Ovary (tissue), 10 donors: ENCODE measurements at regions of chr17 and their contacts with region 1.

Region 1: DNA sequence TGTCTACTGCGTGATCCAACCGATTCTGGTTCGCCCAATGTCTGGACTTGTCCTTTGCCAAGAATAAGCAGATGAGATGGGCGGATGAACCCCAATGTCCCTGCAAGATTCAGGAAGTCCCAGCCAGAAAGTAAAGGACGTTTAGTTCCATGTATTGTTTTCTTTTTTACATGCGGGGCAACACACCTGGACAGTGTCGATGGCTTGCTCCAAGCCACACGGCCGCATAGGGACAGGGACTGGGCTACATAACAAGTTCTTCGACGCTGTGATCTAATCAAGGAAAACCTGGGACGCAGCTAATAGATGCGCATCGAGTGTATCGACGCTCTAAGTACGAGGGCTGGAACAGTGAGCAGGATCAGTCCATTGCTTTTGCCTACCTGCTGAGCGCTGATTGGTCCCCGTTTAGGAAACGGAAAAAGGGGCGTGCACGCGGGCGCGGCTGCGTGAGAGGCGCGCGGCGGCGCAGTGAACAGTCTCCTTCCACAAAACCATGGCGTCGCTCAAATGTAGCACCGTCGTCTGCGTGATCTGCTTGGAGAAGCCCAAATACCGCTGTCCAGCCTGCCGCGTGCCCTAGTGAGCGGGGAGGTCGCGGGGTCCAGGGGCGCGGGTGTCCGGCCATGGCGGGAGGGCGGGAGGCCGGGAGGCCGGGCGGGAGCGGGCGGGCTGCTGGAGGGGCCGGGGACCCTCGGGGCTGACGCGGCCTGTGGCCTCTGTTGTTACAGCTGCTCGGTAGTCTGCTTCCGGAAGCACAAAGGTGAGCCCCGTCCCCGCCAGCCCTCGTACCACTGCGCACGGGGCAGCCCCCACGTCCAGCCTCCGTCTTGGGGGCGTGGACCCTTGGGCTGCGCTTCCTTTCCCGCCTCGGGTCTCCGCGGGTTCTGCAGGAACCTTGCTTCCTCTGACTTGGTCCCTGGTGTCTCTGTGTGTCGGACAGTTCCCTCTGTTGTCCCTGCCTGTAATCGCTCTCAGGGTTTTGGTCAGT is at the start of gene ZNHIT3:
- DNase-seq: peak; percentile 82 to 91 (median 88)
- H3K4me3 ChIP-seq: peak within 1 kb of the TSS; percentile 84
- H3K27ac ChIP-seq: peak within 1 kb of the TSS; percentile 60 to 72
- H3K4me1 ChIP-seq: peaks cover 20% of the 10 kb centered on the region
- H3K27me3 ChIP-seq: no peaks in the 10 kb centered on the region
- CTCF ChIP-seq: no peak
- EP300 ChIP-seq: no peak
- POLR2A ChIP-seq: peak; percentile 42
- total RNA-seq, gene ZNHIT3: 27.7 to 47.2 (median 29.9) TPM

Region 2: GRCh38 chr17:35764123-35764991 is 722.1 kb before region 1 on chr17:
- intact Hi-C with region 1: loop called in 1 of 4 experiments (anchors 10 kb)
- DNase-seq: peak; percentile 77 to 91 (median 83)
- H3K4me3 ChIP-seq: peak overlapping the region; percentile 38
- H3K27ac ChIP-seq: no peak overlapping the region
- H3K4me1 ChIP-seq: peaks cover 3% of the 10 kb centered on the region
- H3K27me3 ChIP-seq: no peaks in the 10 kb centered on the region
- CTCF ChIP-seq: peak; percentile 85 to 91 (median 91)
- EP300 ChIP-seq: no peak
- POLR2A ChIP-seq: no peak

Region 3: DNA sequence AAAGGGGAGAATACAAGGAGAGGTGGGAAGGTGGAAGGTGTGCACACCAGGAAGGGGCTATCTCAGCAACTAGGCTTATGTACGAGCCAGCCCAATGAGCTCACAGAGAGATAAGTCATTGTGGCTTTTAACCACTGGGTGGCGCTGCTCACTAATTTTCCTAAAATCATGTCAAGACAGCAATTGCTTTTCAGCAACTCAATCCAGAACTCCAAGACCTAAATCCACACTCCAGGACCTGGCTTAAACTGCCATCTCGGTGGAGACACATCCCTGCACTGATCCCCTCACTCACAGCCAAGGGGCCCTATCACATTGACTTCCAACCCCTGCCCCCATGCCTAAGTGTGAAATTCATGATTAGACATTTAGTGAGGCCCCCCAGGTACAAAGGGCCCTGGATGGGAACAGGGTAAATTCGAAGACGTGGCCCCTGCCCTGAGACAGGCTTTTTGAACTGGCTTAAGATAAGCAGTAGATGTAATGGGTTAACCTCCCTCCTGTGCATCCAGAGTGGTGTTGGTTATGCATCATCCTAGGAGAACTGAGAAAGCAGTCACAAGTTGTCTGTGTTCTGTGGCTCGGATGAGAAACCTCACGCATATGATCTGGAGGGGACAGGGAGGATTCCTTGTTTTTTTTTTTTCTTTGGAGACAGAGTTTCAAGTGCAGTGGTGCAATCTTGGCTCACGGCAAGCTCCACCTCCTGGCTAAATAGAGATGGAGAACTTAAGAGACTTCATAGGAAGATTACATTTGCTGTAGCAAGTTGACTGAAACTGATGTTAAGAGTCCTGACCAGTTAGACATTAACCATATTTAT is 516.7 kb before region 1 on chr17:
- intact Hi-C with region 1: loop called in 1 of 4 experiments (anchors 10 kb)
- DNase-seq: peak; percentile 28 to 80 (median 67)
- H3K4me3 ChIP-seq: no peak overlapping the region
- H3K27ac ChIP-seq: no peak overlapping the region
- H3K4me1 ChIP-seq: no peaks in the 10 kb centered on the region
- H3K27me3 ChIP-seq: no peaks in the 10 kb centered on the region
- CTCF ChIP-seq: peak; percentile 48 to 62 (median 60)
- EP300 ChIP-seq: no peak
- POLR2A ChIP-seq: no peak

Region 4: GRCh38 chr17:36529121-36529520 is 42.6 kb after region 1 on chr17:
- intact Hi-C with region 1: no loop called
- DNase-seq: no peak
- H3K4me3 ChIP-seq: no peak overlapping the region
- H3K27ac ChIP-seq: no peak overlapping the region
- H3K4me1 ChIP-seq: peaks cover 2% of the 10 kb centered on the region
- H3K27me3 ChIP-seq: no peaks in the 10 kb centered on the region
- CTCF ChIP-seq: no peak
- EP300 ChIP-seq: no peak
- POLR2A ChIP-seq: no peak